Activated T-helper 1 cell treated with anti-CD3 and anti-CD28 coated beads, Interleukin-12 subunit alpha, Interleukin-12 subunit beta, Interleukin-2, Interleukin-4 antibody, amounts not matched to agents 30 ng/mL and 10 ng/mL and 1 ng/mL, durations not matched to agents 14 hours and 24 hours and 36 hours (primary cell): ENCODE measurements at regions of chr16 and their contacts with region 1.

Region 1: DNA sequence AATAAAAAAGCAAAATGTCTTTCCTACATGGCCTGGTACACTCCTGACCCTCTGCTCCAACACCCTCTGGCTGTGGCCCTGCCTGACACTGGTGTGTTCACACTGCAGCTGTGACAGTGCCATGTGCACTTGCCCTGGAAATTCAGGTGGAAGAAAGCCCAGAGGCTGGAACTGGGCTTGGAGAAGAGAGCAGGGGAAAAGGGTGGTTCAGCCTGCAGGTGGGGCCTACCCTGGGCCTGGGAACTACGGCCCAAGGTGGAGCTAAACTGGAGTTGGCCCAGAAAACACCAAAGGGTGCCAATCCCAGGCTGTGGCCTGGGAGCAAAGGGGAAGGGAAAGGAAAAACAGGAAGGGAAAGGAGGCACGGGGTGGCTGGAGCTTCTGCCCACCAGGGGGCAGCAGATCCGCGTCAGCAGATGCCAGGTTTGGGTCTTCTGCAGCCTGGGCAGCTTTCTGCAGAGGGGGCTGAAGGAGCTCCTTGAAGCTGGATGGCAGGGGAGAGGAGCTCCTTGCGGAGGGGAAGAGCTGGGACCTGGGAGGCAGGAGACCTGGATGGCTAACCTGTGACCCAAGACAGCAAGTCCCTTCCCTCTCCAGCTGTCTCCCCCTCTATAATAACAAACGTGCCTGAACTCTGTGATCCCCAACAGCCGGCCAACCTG is 15.4 kb upstream of the CTCF start:
- DNase-seq: peak; percentile 54
- H3K4me3 Mint-ChIP-seq: no peak overlapping the region
- H3K27ac Mint-ChIP-seq: peak overlapping the region; percentile 84
- H3K4me1 Mint-ChIP-seq: peaks cover 37% of the 10 kb centered on the region
- H3K27me3 Mint-ChIP-seq: no peaks in the 10 kb centered on the region

Region 2: DNA sequence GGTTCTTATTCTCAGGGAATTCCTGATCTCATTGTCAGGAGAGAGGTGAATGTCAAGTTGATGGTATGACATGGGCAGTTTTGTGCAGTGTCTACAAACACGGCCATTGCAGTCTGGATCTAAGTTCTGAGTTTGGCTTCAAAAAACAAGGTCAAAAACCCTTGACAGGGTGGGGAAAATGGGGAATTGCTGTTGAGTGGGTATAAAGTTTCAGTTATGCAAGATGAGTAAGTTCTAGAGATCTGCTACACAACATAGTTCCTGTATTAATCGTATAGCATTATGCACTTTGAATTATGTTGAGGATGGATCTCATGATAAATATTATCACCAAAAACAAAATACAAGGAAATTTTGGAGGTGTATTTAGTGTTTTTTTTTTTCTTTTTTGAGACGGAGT is 61.5 kb after region 1 on chr16:
- intact Hi-C with region 1: loop called (anchors 2 kb)
- DNase-seq: no peak
- H3K4me3 Mint-ChIP-seq: no peak overlapping the region
- H3K27ac Mint-ChIP-seq: peak overlapping the region; percentile 44
- H3K4me1 Mint-ChIP-seq: peaks cover 16% of the 10 kb centered on the region
- H3K27me3 Mint-ChIP-seq: no peaks in the 10 kb centered on the region

Region 3: GRCh38 chr16:67645397-67646121 is 98.7 kb after region 1 on chr16:
- intact Hi-C with region 1: loop called (anchors 1 kb)
- DNase-seq: no peak
- H3K4me3 Mint-ChIP-seq: peak overlapping the region; percentile 89
- H3K27ac Mint-ChIP-seq: peak overlapping the region; percentile 94
- H3K4me1 Mint-ChIP-seq: no peaks in the 10 kb centered on the region
- H3K27me3 Mint-ChIP-seq: no peaks in the 10 kb centered on the region

Region 4: DNA sequence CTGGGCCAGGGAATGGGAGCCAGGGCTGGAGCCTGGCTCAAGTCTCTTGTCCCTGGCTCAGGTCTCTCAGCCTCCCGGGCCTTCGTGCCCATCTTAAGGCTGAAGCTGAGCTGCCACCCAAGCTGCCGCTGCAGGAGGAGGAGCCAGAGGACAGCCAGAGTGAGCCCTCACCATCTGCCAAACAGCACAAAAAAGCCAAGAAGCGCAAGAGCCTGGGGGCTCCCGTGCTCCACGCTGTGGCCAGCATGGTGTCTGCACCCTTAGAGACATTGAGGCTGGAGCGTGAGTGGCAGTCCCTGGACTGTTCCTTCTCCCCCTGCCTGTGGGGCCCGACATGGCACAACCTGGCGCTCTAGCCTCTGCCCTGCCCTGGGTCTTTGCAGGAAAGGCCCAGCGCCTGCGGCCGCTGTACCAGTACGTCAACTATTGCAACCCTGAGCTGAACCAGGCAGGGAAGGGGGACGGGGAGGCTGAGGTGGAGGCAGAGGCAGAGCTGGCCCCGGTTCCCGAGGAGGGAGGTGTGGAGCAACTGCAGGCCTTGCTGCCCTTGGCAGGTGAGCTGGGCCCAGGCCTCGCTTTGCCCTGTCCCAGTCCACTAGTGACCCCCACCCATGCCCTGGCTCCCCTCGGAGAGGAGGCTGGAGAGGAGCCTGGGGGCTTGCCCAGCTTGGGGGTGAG is 121.1 kb after region 1 on chr16:
- intact Hi-C with region 1: loop called (anchors 2 kb)
- DNase-seq: peak; percentile 76
- H3K4me3 Mint-ChIP-seq: peak overlapping the region; percentile 83
- H3K27ac Mint-ChIP-seq: no peak overlapping the region
- H3K4me1 Mint-ChIP-seq: peaks cover 5% of the 10 kb centered on the region
- H3K27me3 Mint-ChIP-seq: no peaks in the 10 kb centered on the region

Region 5: GRCh38 chr16:68756250-68756915 is 1209.5 kb after region 1 on chr16:
- intact Hi-C with region 1: no loop called
- DNase-seq: peak; percentile 64
- H3K4me3 Mint-ChIP-seq: peak overlapping the region; percentile 65
- H3K27ac Mint-ChIP-seq: peak overlapping the region; percentile 96
- H3K4me1 Mint-ChIP-seq: peaks cover 56% of the 10 kb centered on the region
- H3K27me3 Mint-ChIP-seq: no peaks in the 10 kb centered on the region